ENCODE measurements at regions of chr2 and their contacts with region 1.

Region 1: GRCh38 chr2:37414470-37414949 is 70.1 kb downstream of the QPCT start:
- DNase-seq: peak; percentile 32

Region 2: DNA sequence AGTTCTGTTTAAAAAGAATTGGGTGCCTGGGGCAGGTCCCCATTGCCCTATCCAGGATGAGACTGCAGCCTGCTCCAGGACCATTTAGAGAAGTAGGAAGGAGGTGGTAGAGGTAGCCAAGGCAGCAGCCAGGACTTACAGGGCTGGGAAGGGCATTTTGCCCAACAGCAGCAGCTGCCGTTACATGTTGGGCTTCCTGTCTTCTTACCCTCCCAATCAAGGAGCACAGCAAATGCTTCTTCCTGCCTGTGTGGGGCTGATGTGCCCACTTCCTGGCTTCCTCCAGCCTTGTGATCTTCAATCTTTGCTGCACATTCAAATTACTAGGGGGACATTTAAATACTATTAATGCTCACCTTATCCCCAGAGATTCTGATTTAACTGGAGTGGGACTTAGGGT is 42.0 kb after region 1 on chr2:
- in situ Hi-C with region 1: no loop called
- DNase-seq: no peak

Region 3: DNA sequence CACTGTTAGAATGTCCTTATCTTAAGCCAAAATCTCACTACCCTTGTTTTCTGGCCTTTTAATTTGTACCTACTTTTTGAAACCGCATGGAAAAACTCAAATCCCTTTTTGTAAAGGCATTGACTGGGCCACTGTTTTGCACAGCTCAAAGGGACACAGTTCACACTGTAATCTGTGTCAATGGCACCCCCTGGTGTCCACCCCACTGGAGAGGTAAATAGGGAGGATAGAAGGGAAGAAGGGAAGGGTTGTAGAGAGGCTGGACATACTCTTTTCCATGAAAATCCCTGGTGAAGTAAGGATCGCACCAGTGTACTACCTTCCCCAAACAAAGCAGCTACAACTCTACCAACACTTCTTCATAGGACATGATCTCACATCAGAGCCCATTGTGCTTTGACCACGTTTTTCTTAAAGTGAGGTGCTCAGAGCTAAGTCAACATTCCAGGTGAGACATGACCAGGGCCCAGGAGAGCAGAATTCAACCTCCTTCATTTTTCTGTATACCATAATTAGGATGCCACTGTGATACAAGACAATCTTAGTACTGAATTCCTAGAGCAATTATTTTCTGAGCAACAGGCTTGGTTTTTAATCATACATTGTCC is 418.2 kb after region 1 on chr2:
- in situ Hi-C with region 1: loop called (anchors 25 kb)
- DNase-seq: peak; percentile 45

Region 4: GRCh38 chr2:38146275-38146906 is 731.9 kb after region 1 on chr2:
- in situ Hi-C with region 1: no loop called
- DNase-seq: no peak

Measured in G401 (cell line).